ENCODE measurements at regions of chr13 and their contacts with region 1.

Region 1: DNA sequence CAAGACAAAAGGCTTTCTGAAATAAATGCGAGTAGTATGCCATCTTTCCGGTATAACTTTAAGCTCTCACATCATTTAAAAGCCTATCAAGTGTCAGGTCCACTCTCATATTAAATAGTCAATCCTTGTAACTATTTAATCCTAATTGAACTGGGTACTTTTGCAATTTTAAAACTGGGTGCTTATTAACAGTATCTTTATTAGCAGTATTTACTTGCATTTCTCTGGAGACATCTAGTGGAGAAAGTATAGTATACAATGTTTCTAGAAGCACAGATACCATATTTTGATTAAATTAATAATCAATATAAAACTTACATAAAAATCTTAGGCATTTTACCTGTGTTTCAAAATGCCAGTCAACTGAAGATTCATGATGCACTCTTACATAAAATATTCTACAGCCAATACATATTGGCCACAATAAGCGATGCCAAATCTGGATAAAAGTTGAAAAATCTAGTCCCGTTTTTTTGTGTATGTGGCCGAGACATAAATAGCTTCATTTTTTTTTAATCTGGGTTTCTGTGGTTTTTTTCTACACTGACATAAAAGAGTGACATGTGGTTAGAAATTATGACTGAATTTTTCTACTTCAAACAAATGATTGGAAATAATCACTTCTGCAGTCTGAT is 4.3 kb upstream of the POSTN start:
- DNase-seq: no peak
- H3K4me3 ChIP-seq: no peak overlapping the region
- H3K27ac ChIP-seq: no peak overlapping the region
- H3K4me1 ChIP-seq: no peaks in the 10 kb centered on the region
- H3K27me3 ChIP-seq: no peaks in the 10 kb centered on the region
- CTCF ChIP-seq: peak in 3 of 6 experiments; percentile 31 to 65 (median 51)
- POLR2A ChIP-seq: no peak

Region 2: GRCh38 chr13:37109051-37109678 is 493.7 kb before region 1 on chr13:
- intact Hi-C with region 1: loop called (anchors 10 kb)
- DNase-seq: no peak
- H3K4me3 ChIP-seq: no peak overlapping the region
- H3K27ac ChIP-seq: no peak overlapping the region
- H3K4me1 ChIP-seq: no peaks in the 10 kb centered on the region
- H3K27me3 ChIP-seq: no peaks in the 10 kb centered on the region
- CTCF ChIP-seq: peak in 3 of 6 experiments; percentile 53 to 60 (median 58)
- POLR2A ChIP-seq: no peak

Region 3: GRCh38 chr13:37510441-37510840 is 92.4 kb before region 1 on chr13:
- intact Hi-C with region 1: no loop called
- DNase-seq: peak in 1 of 2 donors; percentile 2
- H3K4me3 ChIP-seq: no peak overlapping the region
- H3K27ac ChIP-seq: no peak overlapping the region
- H3K4me1 ChIP-seq: no peaks in the 10 kb centered on the region
- H3K27me3 ChIP-seq: no peaks in the 10 kb centered on the region
- CTCF ChIP-seq: no peak
- POLR2A ChIP-seq: no peak

Region 4: DNA sequence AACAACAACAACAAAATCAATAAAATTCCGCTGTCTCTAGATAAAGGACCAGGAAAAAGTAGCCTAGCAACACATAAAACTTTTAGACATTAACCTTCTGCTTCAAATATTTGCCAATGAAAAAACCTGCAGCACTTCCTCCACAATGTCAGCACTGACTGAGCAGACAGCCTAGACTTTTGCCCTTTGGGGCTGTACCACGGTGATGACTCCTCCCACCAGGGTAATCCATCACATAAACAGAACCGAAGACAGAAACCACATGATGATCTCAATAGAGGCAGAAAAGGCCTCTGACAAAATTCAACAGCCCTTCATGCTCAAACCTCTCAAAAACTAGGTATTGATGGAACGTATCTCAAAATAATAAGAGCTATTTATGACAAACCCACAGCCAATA is 296.9 kb after region 1 on chr13:
- intact Hi-C with region 1: no loop called
- DNase-seq: no peak
- H3K4me3 ChIP-seq: no peak overlapping the region
- H3K27ac ChIP-seq: no peak overlapping the region
- H3K4me1 ChIP-seq: no peaks in the 10 kb centered on the region
- H3K27me3 ChIP-seq: no peaks in the 10 kb centered on the region
- CTCF ChIP-seq: no peak
- POLR2A ChIP-seq: no peak